Cardiac septum (tissue), 1 donor: ENCODE measurements at regions of chr16 and their contacts with region 1.

Region 1: DNA sequence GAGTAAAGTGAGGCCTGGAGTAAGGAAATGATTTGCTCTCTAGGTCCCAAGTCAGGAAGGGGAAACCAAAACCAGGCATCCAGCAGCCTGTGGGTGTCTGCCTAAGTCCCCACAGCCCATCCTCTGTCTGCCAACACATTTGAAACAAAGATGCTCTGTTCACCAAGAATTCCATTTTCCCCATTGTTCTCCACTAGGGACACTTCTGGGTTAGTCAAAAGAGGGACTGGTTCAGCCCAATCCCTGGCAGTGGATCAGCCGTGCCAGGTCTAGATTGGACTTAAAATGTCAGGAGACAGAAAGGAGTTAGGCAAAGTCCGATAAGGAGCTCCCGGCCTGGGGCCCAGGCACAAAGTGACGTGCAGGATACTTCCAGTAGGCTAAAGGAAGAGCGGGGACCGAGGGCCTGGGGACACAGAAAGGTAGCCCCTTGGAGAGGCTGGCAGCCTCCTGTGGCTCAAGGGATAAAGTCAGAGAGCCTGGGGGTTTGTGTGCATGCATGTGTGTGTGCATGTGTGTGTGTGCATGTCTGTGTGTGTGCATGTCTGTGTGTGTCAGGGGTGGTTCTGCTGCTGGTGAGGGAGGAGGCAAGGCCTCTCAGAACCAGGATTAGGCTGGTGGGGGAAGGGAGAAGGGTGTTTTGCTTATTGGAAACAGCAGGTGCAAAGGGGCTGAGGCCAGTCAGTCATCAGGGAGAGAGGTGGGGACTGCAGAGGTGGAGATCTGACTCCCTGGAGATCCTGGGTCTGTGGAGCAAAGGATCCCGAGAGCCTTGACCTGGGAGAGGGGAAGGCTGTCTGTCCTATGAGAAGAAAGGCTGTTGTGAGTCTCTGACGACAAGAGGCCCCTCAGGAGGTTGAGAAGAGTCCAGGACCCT is 41.7 kb upstream of the IL34 start:
- DNase-seq: no peak

Region 2: GRCh38 chr16:70508752-70509151 is 95.9 kb before region 1 on chr16:
- intact Hi-C with region 1: no loop called
- DNase-seq: no peak

Region 3: DNA sequence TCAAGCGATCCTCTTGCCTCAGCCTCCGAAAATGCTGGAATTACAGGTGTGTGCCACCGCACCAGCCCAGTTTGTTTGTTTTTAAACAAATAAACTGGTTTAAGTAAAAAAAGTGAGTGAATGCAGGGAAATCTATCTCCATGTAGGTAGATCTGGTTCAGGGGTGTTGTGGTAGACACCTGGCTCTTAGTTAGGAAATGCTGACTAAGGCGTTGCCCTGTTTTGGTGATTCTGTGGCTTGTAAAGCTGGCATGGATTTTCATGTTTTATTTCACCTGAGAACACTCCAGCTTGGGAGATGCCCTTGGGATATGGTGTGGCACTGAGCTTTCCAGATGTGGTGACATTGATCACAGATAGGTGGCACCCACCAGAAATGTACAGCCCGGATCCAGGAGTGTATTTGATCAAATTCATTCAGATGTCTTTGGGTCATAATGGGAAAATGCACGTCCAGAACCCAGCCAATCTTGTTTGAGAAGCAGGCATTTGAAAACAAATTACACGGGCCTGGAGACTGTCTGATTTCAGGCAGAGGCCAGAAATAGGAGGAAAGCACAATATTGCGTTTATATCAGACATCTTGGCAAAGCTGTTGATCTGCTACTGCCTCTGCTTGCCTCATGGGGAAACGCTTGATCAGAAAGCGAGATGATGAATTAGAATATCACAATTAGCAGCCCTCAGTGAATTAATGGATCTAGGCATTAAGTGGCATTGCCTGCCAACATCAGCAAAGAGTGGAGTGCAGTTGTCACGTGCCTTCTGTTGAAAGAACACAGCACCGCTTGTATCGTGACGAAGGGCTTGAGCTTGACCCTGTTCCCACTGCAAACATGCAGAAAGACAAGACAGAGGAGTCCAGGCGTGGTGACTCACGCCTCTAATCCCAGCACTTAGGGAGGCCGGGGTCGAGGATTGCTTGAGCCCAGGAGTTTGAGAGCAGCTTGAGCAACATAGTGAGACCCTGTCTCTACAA is 34.5 kb after region 1 on chr16:
- intact Hi-C with region 1: loop called (anchors 5 kb)
- DNase-seq: no peak